ENCODE measurements at regions of chr1 and their contacts with region 1.

Region 1: GRCh38 chr1:8922962-8923361 is 22.7 kb upstream of the CA6 start:
- DNase-seq: no peak
- H3K4me3 ChIP-seq: no peak overlapping the region
- H3K27ac ChIP-seq: no peak overlapping the region
- H3K4me1 ChIP-seq: no peaks in the 10 kb centered on the region
- H3K27me3 ChIP-seq: no peaks in the 10 kb centered on the region
- CTCF ChIP-seq: no peak
- POLR2A ChIP-seq: no peak

Region 2: GRCh38 chr1:8987881-8988617 is 65.1 kb after region 1 on chr1:
- intact Hi-C with region 1: loop called (anchors 5 kb)
- DNase-seq: no peak
- H3K4me3 ChIP-seq: no peak overlapping the region
- H3K27ac ChIP-seq: peak overlapping the region; percentile 42
- H3K4me1 ChIP-seq: peaks cover 24% of the 10 kb centered on the region
- H3K27me3 ChIP-seq: no peaks in the 10 kb centered on the region
- CTCF ChIP-seq: peak; percentile 77 to 89 (median 85)
- POLR2A ChIP-seq: no peak

Measured in vagina (tissue), 2 donors.